ENCODE measurements at regions of chr1 and their contacts with region 1.

Region 1: DNA sequence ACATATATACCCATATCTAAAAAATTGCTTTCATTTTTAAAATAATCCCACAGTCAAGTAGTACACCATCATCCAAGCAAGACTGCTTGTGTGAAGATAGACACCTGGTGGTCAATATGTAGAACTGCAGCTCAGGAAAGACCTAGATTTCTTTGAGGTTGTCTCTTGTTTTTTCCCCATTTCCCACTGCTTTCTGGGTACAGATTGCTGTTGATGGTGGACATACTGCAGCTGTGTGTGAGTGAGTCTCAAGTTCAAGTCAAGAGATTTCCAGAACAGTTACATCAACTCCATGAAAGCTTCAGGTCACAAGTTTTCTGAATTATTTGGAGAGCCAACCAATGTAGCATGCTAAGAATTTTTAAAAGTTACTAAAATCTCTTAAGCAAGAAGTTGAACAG is 306.4 kb downstream of the DUSP10 start:
- DNase-seq: no peak
- H3K4me3 ChIP-seq: no peak overlapping the region
- H3K27ac ChIP-seq: peak overlapping the region in 3 of 4 donors; percentile 1 to 32 (median 24)
- H3K4me1 ChIP-seq: peaks cover 0 to 47% (median 31%) of the 10 kb centered on the region in 4 donors
- H3K27me3 ChIP-seq: no peaks in the 10 kb centered on the region
- CTCF ChIP-seq: peak; percentile 84 to 93 (median 90)
- EP300 ChIP-seq: no peak
- POLR2A ChIP-seq: no peak

Region 2: GRCh38 chr1:220873868-220874655 is 561.4 kb before region 1 on chr1:
- intact Hi-C with region 1: loop called (anchors 1 kb)
- DNase-seq: no peak
- H3K4me3 ChIP-seq: no peak overlapping the region
- H3K27ac ChIP-seq: peak overlapping the region in 3 of 4 donors; percentile 95 to 100 (median 99)
- H3K4me1 ChIP-seq: peaks cover 0 to 65% (median 51%) of the 10 kb centered on the region in 4 donors
- H3K27me3 ChIP-seq: no peaks in the 10 kb centered on the region
- CTCF ChIP-seq: peak; percentile 63 to 76 (median 68)
- EP300 ChIP-seq: no peak
- POLR2A ChIP-seq: no peak

Region 3: GRCh38 chr1:221203224-221204054 is 232.1 kb before region 1 on chr1:
- intact Hi-C with region 1: loop called (anchors 5 kb)
- DNase-seq: peak; percentile 88
- H3K4me3 ChIP-seq: no peak overlapping the region
- H3K27ac ChIP-seq: peak overlapping the region; percentile 54 to 70 (median 62)
- H3K4me1 ChIP-seq: peaks cover 0 to 30% (median 14%) of the 10 kb centered on the region in 4 donors
- H3K27me3 ChIP-seq: no peaks in the 10 kb centered on the region
- CTCF ChIP-seq: peak; percentile 46 to 88 (median 72)
- EP300 ChIP-seq: no peak
- POLR2A ChIP-seq: no peak

Region 4: DNA sequence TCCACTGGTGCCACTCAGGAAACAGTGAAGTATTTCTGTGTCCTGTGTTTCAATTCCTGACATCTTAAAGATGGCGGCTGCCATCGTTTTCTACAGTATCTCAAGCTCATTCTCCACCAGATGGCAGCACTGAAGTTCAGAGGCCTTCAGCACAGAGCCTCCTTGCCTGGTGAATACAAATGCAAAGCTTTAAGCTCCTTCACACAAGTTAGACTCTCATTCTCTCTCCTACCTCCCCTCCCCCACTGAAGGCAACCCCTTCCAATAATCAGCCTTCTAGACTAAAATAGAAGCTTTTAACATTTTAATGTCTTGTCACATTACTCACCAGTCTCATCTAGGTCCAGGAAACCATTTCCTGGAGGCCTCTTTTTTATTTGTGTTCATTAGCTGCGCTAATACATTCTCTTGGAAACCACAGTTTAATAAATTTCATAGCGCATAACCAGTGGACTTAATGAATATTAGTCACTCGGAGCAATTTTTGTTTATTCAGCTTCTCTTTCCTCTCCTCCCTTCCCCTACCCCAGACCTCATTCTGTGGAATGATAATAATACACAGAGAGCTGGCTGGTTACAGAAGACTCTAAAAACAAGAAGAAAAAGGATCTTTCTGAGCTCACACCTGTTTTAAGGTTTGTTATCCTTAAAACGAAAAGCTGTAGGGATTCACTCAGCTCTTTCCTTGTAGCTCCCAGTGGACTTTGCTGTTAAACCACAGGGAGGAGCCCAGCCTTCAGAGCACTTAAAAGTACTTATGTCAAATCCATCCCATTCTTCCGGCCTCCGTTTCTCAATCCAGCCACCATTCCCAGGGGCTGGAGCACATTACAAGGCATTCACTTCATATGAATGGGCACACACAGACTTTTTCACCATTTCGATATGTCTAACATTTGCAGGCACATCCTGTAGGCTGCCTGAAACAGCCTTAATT is 171.4 kb before region 1 on chr1:
- intact Hi-C with region 1: loop called (anchors 5 kb)
- DNase-seq: peak; percentile 76
- H3K4me3 ChIP-seq: no peak overlapping the region
- H3K27ac ChIP-seq: peak overlapping the region in 2 of 4 donors; percentile 9 to 51
- H3K4me1 ChIP-seq: peaks cover 0 to 7% (median 4%) of the 10 kb centered on the region in 4 donors
- H3K27me3 ChIP-seq: no peaks in the 10 kb centered on the region
- CTCF ChIP-seq: peak; percentile 12 to 38 (median 28)
- EP300 ChIP-seq: no peak
- POLR2A ChIP-seq: no peak

Region 5: GRCh38 chr1:221693087-221693486 is 257.6 kb after region 1 on chr1:
- intact Hi-C with region 1: no loop called
- DNase-seq: no peak
- H3K4me3 ChIP-seq: no peak overlapping the region
- H3K27ac ChIP-seq: no peak overlapping the region
- H3K4me1 ChIP-seq: peaks cover 0 to 20% (median 8%) of the 10 kb centered on the region in 4 donors
- H3K27me3 ChIP-seq: no peaks in the 10 kb centered on the region
- CTCF ChIP-seq: no peak
- EP300 ChIP-seq: no peak
- POLR2A ChIP-seq: no peak

Region 6: DNA sequence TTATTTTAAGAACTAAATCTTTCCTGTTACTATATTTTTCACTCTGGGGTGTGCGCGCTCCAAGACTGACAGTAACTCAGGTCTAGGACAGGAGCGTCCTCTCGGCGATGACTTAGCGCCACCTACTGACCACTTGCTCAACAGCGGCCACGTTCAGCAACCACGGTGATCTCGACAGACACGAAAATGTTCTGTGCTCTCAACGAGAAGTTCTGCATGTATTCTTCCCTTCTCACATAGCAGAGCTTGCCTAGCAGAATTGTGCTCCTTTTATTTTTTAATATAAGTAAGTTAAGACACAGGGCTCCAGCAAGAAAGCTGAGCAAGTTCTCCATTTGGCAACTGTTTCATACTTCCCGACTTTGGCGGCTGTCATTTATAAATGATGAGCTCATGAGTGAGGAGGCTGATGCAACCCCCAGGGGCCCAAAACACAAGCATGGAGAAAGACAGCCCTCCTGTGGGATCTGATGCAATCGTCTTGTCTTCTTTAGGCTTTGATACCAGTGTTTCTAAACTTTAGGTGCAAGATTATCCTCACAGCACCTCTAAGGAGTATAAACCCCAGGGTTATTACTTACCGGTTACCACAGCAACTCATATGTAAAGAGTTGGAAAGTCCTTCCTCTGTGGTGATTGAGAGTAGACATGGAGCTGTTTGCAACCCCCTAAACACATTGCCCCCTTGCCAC is 1019.8 kb after region 1 on chr1:
- intact Hi-C with region 1: loop called (anchors 10 kb)
- DNase-seq: peak; percentile 93
- H3K4me3 ChIP-seq: peak overlapping the region in 2 of 4 donors; percentile 15 to 22
- H3K27ac ChIP-seq: peak overlapping the region; percentile 31 to 64 (median 42)
- H3K4me1 ChIP-seq: peaks cover 0 to 14% (median 11%) of the 10 kb centered on the region in 4 donors
- H3K27me3 ChIP-seq: no peaks in the 10 kb centered on the region
- CTCF ChIP-seq: peak; percentile 79 to 90 (median 87)
- EP300 ChIP-seq: no peak
- POLR2A ChIP-seq: no peak

Measured in sigmoid colon (tissue), 7 donors.